Endothelial cell of umbilical vein (primary cell): ENCODE measurements at regions of chrX and their contacts with region 1.

Region 1: GRCh38 chrX:70087857-70088630 is 25.8 kb downstream of the OTUD6A start:
- DNase-seq: peak; percentile 75
- H3K4me3 ChIP-seq: no peak overlapping the region
- H3K27ac ChIP-seq: no peak overlapping the region
- H3K4me1 ChIP-seq: peaks cover 29% of the 10 kb centered on the region
- H3K27me3 ChIP-seq: no peaks in the 10 kb centered on the region
- CTCF ChIP-seq: no peak
- POLR2A ChIP-seq: no peak

Region 2: DNA sequence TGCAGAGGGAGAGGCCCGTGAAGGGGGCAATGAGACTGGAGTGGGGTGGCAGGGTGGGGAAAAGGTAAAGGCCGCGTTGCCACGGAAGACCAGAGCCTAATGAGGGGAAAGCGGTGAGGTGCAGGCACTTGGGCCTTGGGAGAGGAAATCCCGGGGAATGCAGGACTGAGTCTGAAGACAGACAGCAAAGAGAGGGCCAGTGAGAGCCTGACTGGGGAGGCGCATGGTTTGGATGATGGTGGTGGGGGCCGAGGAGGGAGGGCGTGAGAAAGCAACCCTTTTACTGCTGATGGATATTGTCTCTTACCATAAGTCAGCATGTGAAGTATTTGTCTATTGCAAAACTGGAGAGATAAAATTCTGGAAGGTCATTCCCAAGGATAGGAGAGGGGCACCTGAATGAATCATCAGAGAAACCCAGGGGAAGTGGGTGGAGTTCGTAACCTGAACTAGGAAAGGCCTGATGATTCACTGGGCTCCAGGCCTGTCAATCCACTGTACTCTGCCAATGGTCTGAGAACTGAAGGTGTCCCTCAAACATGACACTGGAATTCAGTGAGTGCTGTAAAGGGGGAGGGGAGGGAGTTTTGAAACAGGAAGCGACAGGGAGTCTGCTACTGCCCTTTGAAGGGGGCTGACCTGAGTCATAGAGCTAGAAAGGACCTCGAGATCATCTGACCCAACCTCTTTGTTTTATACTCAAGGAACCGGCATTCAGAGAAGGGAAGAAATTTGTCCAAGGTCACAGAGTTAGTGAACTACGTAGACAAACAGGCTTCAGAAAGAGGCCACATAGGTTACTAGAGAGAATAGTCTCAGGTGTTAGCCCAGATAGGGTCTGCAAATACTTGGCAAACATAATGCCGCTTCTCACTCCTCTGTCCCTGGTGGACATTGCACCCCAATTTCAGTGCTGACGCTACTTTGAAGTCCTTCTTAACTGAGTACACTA is 531.7 kb before region 1 on chrX:
- CTCF ChIA-PET with region 1: no interaction called
- POLR2A ChIA-PET with region 1: no interaction called
- dilution Hi-C with region 1: no loop called
- intact Hi-C with region 1: no loop called
- DNase-seq: no peak
- H3K4me3 ChIP-seq: no peak overlapping the region
- H3K27ac ChIP-seq: no peak overlapping the region
- H3K4me1 ChIP-seq: no peaks in the 10 kb centered on the region
- H3K27me3 ChIP-seq: no peaks in the 10 kb centered on the region
- CTCF ChIP-seq: no peak
- POLR2A ChIP-seq: no peak

Region 3: GRCh38 chrX:69740317-69740716 is 347.7 kb before region 1 on chrX:
- CTCF ChIA-PET with region 1: no interaction called
- POLR2A ChIA-PET with region 1: no interaction called
- dilution Hi-C with region 1: no loop called
- intact Hi-C with region 1: no loop called
- DNase-seq: no peak
- H3K4me3 ChIP-seq: no peak overlapping the region
- H3K27ac ChIP-seq: no peak overlapping the region
- H3K4me1 ChIP-seq: no peaks in the 10 kb centered on the region
- H3K27me3 ChIP-seq: no peaks in the 10 kb centered on the region
- CTCF ChIP-seq: no peak
- POLR2A ChIP-seq: no peak

Region 4: GRCh38 chrX:70046978-70047377 is 41.1 kb before region 1 on chrX:
- CTCF ChIA-PET with region 1: interaction called, 4 read pairs
- POLR2A ChIA-PET with region 1: no interaction called
- dilution Hi-C with region 1: no loop called
- intact Hi-C with region 1: loop called (anchors 2 kb)
- DNase-seq: peak; percentile 48
- H3K4me3 ChIP-seq: no peak overlapping the region
- H3K27ac ChIP-seq: peak overlapping the region; percentile 75
- H3K4me1 ChIP-seq: peaks cover 25% of the 10 kb centered on the region
- H3K27me3 ChIP-seq: no peaks in the 10 kb centered on the region
- CTCF ChIP-seq: no peak
- POLR2A ChIP-seq: no peak